ENCODE measurements at regions of chr6 and their contacts with region 1.

Region 1: DNA sequence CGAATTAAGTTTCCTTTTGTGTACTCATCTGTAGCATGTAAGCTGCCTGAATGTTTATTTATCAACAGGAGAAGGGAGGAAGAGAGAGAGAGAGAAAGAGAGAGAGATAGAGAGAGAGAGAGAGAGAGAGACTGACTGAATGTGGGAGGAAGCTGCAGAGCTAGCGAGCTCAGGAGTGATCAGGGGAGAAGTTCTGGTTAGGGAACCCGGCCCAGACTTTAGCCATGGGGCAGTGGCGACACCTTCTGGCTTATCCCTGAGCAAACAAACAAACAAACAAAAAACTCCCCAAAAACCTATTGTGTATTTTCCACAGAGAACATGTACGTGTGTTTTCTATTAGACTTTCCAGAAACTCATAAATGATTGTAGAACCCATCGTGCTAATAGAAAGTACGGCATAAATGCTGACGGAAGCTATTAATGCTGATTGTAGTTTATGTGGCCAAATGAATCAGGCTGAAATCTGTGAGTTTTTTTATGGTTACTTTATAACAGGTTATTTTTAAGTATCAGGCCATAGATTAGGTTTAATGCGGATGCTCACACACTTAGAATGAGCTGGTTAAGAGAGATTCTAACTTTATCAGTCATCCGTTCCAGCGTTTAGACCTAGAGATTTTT is 92.8 kb downstream of the CLIC5 start:
- DNase-seq: peak; percentile 58
- H3K4me3 Mint-ChIP-seq: peak overlapping the region; percentile 53
- H3K27ac Mint-ChIP-seq: peak overlapping the region; percentile 94
- H3K4me1 Mint-ChIP-seq: peaks cover 68% of the 10 kb centered on the region
- H3K27me3 Mint-ChIP-seq: no peaks in the 10 kb centered on the region

Region 2: GRCh38 chr6:44655412-44656342 is 1267.2 kb before region 1 on chr6:
- intact Hi-C with region 1: loop called (anchors 5 kb)
- DNase-seq: peak; percentile 55
- H3K4me3 Mint-ChIP-seq: peak overlapping the region; percentile 53
- H3K27ac Mint-ChIP-seq: peak overlapping the region; percentile 89
- H3K4me1 Mint-ChIP-seq: peaks cover 12% of the 10 kb centered on the region
- H3K27me3 Mint-ChIP-seq: no peaks in the 10 kb centered on the region

Region 3: GRCh38 chr6:45209762-45210161 is 713.1 kb before region 1 on chr6:
- intact Hi-C with region 1: loop called (anchors 5 kb)
- DNase-seq: no peak
- H3K4me3 Mint-ChIP-seq: no peak overlapping the region
- H3K27ac Mint-ChIP-seq: peak overlapping the region; percentile 47
- H3K4me1 Mint-ChIP-seq: peaks cover 50% of the 10 kb centered on the region
- H3K27me3 Mint-ChIP-seq: no peaks in the 10 kb centered on the region

Region 4: GRCh38 chr6:45543298-45544235 is 379.3 kb before region 1 on chr6:
- intact Hi-C with region 1: loop called (anchors 5 kb)
- DNase-seq: no peak
- H3K4me3 Mint-ChIP-seq: no peak overlapping the region
- H3K27ac Mint-ChIP-seq: peak overlapping the region; percentile 24
- H3K4me1 Mint-ChIP-seq: peaks cover 68% of the 10 kb centered on the region
- H3K27me3 Mint-ChIP-seq: no peaks in the 10 kb centered on the region

Region 5: GRCh38 chr6:45626087-45626891 is 296.6 kb before region 1 on chr6:
- intact Hi-C with region 1: loop called (anchors 1 kb)
- DNase-seq: no peak
- H3K4me3 Mint-ChIP-seq: no peak overlapping the region
- H3K27ac Mint-ChIP-seq: peak overlapping the region; percentile 86
- H3K4me1 Mint-ChIP-seq: peaks cover 61% of the 10 kb centered on the region
- H3K27me3 Mint-ChIP-seq: no peaks in the 10 kb centered on the region

Region 6: DNA sequence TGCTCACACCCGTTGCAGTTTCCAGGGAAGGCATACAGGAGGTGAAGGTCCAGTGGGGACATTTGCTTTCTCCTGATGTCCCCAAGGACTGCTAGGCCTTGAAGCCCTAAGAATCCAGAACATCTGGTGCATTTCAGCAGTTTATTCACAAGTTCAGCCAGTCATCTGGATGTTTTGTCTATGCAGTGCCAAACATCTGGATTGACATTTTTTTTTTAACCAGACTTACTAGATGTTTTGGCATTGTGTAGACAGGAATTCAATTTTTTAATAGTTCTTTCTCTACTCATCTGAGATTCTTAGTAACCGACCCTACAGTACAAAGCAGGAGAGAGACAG is 163.4 kb before region 1 on chr6:
- intact Hi-C with region 1: loop called (anchors 1 kb)
- DNase-seq: no peak
- H3K4me3 Mint-ChIP-seq: no peak overlapping the region
- H3K27ac Mint-ChIP-seq: peak overlapping the region; percentile 65
- H3K4me1 Mint-ChIP-seq: peaks cover 30% of the 10 kb centered on the region
- H3K27me3 Mint-ChIP-seq: no peaks in the 10 kb centered on the region

Region 7: GRCh38 chr6:45864651-45865050 is 58.2 kb before region 1 on chr6:
- intact Hi-C with region 1: no loop called
- DNase-seq: no peak
- H3K4me3 Mint-ChIP-seq: no peak overlapping the region
- H3K27ac Mint-ChIP-seq: no peak overlapping the region
- H3K4me1 Mint-ChIP-seq: peaks cover 7% of the 10 kb centered on the region
- H3K27me3 Mint-ChIP-seq: no peaks in the 10 kb centered on the region

Region 8: DNA sequence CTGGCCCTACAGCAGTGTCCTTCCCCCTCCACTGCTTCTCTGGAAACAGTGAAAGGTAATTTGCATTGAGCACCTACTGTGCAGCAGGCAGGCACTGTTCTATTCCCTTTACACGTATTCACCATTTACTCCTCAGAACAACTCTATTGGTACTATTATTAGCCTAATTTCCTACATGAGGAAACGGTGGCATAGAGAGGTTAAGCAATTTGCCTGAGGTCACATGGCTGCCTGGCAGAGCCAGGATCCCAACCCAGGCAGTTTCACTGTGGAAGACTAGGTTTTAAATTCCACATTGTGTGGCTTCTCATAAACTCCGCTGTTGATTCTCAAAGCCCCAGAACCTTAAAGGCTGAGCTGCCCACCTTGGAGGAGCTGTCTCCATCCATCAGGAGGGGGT is 20.1 kb after region 1 on chr6:
- intact Hi-C with region 1: no loop called
- DNase-seq: no peak
- H3K4me3 Mint-ChIP-seq: no peak overlapping the region
- H3K27ac Mint-ChIP-seq: no peak overlapping the region
- H3K4me1 Mint-ChIP-seq: peaks cover 7% of the 10 kb centered on the region
- H3K27me3 Mint-ChIP-seq: no peaks in the 10 kb centered on the region

Measured in activated T-helper 2 cell treated with anti-CD3 and anti-CD28 coated beads, Interferon-gamma antibody, Interleukin-2, Interleukin-4, amounts not matched to agents 10 μg/mL and 5 μg/mL and 100 μg/mL, durations not matched to agents 14 hours and 24 hours and 36 hours (primary cell).